GM12878 (cell line): ENCODE measurements at regions of chr16 and their contacts with region 1.

Region 1: DNA sequence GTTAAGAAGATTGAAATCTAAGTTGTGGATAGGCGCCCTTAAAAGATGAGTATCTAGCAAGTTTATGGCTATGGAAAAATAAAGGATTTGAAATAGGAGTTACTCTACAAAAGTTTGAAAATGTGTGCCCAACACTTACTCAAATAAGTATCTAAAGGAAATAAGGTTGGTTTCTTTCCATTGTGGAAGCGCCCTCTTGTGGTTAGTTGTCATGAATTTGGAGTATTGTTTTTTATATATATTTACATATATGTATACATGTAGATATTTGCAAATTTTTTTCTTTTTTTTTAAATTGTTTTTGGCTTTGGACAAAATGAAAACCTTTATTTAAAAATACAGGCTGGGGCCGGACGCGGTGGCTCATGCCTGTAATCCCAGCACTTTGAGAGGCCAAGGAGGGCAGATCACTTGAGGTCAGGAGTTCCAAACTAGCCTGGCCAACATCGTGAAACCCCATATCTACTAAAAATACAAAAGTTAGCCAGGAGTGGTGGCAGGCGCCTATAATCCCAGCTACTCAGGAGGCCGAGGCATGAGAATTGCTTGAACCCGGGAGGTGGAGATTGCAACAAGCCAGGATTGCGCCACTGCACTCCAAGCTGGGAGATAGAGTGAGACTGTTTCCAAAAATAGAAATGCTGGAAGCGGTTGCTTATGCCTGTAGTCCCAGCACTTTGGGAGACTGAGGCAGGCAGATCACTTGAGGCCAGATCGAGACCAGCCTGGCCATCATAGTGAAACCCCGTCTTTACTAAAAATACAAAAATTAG is 24.0 kb upstream of the VPS4A start:
- DNase-seq: peak; percentile 5
- ATAC-seq: peak; percentile 68
- H3K4me3 ChIP-seq: no peak overlapping the region
- H3K27ac ChIP-seq: no peak overlapping the region
- H3K4me1 ChIP-seq: no peaks in the 10 kb centered on the region
- H3K27me3 ChIP-seq: no peaks in the 10 kb centered on the region
- CTCF ChIP-seq: peak; percentile 26 to 54 (median 32); a peak in 4 of 6 replicates
- EP300 ChIP-seq: no peak
- POLR2A ChIP-seq: no peak
- RAD21 ChIP-seq: peak; percentile 60

Region 2: DNA sequence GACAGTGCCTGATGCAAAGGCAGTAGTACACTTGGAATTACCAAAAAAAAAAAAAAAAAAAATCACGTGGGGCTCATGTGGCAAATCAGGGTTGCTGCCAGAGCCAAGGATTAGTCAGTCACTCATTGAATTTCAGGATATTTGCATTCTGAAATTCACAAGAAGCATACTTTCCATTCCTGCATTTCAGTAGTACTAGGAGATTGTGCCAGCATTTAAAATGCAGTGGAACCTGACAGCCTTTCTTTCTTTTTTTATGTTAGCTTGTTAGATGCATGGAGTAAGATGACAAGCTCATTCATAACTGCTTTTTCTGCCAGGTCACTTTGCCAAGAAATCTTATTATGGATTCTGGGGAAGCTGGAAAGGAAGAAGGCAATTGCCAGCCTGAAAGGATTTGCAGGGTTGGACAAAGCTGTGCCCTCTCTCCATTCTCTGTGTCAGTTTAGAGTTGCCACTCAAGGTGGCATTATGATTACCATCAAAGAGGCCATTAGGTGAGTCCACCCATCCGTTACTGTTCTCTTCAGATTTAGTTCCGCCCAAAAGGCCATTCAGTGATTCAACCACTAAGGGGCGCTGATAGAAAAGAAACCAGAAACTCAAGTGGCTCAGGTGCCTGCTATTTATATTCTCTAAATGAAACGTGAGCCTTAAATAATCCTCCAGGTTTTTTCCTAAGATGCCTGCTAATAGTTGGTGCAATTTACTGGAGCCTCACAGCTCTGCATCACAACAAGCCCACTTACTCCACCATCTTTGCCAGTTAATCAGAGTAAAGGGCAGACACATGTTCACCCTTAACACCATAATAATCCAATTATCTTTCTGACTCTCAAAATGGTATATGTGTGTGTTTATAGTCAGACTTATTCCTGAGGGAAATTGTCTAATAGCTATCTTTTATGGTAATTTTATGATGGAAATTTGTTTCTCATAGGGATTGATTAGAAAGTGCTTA is 384.8 kb before region 1 on chr16:
- CTCF ChIA-PET with region 1: interaction called, 4 read pairs
- POLR2A ChIA-PET with region 1: no interaction called
- RAD21 ChIA-PET with region 1: interaction called, 3 read pairs
- SMC1A ChIA-PET with region 1: interaction called, 4 read pairs
- in situ Hi-C with region 1: no loop called
- intact Hi-C with region 1: loop called (anchors 10 kb)
- DNase-seq: no peak
- ATAC-seq: peak; percentile 68
- H3K4me3 ChIP-seq: no peak overlapping the region
- H3K27ac ChIP-seq: no peak overlapping the region
- H3K4me1 ChIP-seq: no peaks in the 10 kb centered on the region
- H3K27me3 ChIP-seq: no peaks in the 10 kb centered on the region
- CTCF ChIP-seq: peak; percentile 54 to 61 (median 54); a peak in 5 of 6 replicates
- EP300 ChIP-seq: no peak
- POLR2A ChIP-seq: no peak
- RAD21 ChIP-seq: peak; percentile 79

Region 3: DNA sequence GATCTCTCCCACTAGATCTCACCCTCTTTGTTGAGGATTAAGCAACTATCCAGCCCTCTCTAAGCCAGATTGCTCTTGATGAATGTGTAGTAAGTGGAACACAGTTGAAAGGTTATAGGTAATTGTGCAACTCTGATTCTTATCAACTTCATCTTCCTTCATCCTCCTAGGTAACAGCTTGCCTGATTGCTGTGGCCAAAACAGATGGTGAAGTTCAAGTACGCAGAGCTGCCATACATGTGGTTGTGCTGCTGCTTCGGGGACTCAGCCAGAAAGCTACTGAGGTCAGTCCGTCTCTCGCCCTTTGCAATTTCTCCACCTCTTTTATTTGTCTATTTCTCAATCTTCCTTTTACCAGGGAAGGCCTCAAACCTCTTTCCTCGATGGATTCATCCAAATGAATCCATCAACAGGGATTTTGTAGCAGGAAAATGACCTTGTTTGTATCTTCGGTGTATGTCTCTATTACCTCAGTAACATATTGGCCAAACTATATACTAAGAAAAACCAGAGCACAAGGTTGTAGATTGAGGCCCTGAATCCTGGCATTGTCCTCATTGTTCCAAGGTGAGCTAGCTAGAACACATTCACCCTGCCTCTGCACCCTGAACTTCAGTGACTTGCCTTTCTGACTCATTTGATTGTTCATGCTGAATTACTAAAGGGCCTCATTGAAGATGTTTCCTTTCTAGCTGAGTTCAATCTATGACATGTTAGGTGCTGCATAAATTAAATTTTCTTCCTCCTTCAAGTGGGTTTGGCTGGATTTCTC is 246.8 kb before region 1 on chr16:
- CTCF ChIA-PET with region 1: no interaction called
- POLR2A ChIA-PET with region 1: no interaction called
- RAD21 ChIA-PET with region 1: no interaction called
- SMC1A ChIA-PET with region 1: no interaction called
- in situ Hi-C with region 1: no loop called
- intact Hi-C with region 1: no loop called
- DNase-seq: no peak
- ATAC-seq: no peak
- H3K4me3 ChIP-seq: no peak overlapping the region
- H3K27ac ChIP-seq: no peak overlapping the region
- H3K4me1 ChIP-seq: no peaks in the 10 kb centered on the region
- H3K27me3 ChIP-seq: no peaks in the 10 kb centered on the region
- CTCF ChIP-seq: no peak
- EP300 ChIP-seq: no peak
- POLR2A ChIP-seq: no peak
- RAD21 ChIP-seq: no peak

Region 4: GRCh38 chr16:69112285-69113129 is 174.6 kb before region 1 on chr16:
- CTCF ChIA-PET with region 1: interaction called, 12 read pairs
- POLR2A ChIA-PET with region 1: no interaction called
- RAD21 ChIA-PET with region 1: interaction called, 4 read pairs
- SMC1A ChIA-PET with region 1: no interaction called
- in situ Hi-C with region 1: no loop called
- intact Hi-C with region 1: no loop called
- DNase-seq: no peak
- ATAC-seq: peak; percentile 99
- H3K4me3 ChIP-seq: no peak overlapping the region
- H3K27ac ChIP-seq: no peak overlapping the region
- H3K4me1 ChIP-seq: no peaks in the 10 kb centered on the region
- H3K27me3 ChIP-seq: no peaks in the 10 kb centered on the region
- CTCF ChIP-seq: peak; percentile 83 to 91 (median 84)
- EP300 ChIP-seq: no peak
- POLR2A ChIP-seq: no peak
- RAD21 ChIP-seq: peak; percentile 48

Region 5: DNA sequence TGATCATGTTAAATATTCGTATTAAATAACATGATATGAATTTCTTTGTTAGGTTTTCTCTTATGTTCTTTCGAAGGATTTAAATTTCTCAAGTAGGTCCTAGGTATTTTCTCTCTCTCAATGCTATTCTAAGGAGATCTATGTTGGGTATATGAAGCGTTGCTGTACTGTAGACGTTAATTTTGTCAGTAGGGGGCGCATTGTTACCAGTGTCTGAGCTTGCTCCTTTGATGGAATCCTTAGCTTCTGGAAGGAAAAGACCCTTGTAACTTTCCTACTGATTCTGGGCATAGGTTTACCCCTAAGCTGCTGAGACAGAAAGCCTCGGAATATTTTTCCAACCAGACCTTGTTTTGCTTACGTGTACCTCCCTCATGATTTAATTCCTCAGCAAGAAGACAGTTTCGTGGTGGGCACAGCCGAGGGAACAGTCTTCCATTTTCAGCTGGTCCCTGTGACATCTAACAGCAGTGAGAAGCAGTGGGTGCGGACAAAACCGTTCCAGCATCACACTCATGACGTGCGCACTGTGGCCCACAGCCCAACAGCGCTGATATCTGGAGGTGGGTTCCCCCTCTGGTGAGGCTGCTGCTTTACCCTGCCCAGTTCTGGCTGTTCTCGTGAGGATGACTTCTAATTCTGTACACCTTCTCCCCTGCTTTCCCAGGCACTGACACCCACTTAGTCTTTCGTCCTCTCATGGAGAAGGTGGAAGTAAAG is 136.8 kb before region 1 on chr16:
- CTCF ChIA-PET with region 1: interaction called, 193 read pairs
- POLR2A ChIA-PET with region 1: interaction called, 4 read pairs
- RAD21 ChIA-PET with region 1: interaction called, 69 read pairs
- SMC1A ChIA-PET with region 1: interaction called, 117 read pairs
- in situ Hi-C with region 1: loop called (anchors 5 kb)
- intact Hi-C with region 1: loop called (anchors 1 kb)
- DNase-seq: no peak
- ATAC-seq: peak; percentile 96
- H3K4me3 ChIP-seq: no peak overlapping the region
- H3K27ac ChIP-seq: no peak overlapping the region
- H3K4me1 ChIP-seq: no peaks in the 10 kb centered on the region
- H3K27me3 ChIP-seq: no peaks in the 10 kb centered on the region
- CTCF ChIP-seq: peak; percentile 64 to 76 (median 75)
- EP300 ChIP-seq: no peak
- POLR2A ChIP-seq: no peak
- RAD21 ChIP-seq: peak; percentile 84

Region 6: GRCh38 chr16:69166221-69166833 is 120.8 kb before region 1 on chr16:
- CTCF ChIA-PET with region 1: interaction called, 11 read pairs
- POLR2A ChIA-PET with region 1: no interaction called
- RAD21 ChIA-PET with region 1: interaction called, 4 read pairs
- SMC1A ChIA-PET with region 1: interaction called, 4 read pairs
- in situ Hi-C with region 1: no loop called
- intact Hi-C with region 1: no loop called
- DNase-seq: no peak
- ATAC-seq: peak; percentile 38; the same call in 2 of the 3 replicates
- H3K4me3 ChIP-seq: no peak overlapping the region
- H3K27ac ChIP-seq: no peak overlapping the region
- H3K4me1 ChIP-seq: peaks cover 5% of the 10 kb centered on the region
- H3K27me3 ChIP-seq: no peaks in the 10 kb centered on the region
- CTCF ChIP-seq: no peak
- EP300 ChIP-seq: no peak
- POLR2A ChIP-seq: no peak
- RAD21 ChIP-seq: no peak

Region 7: DNA sequence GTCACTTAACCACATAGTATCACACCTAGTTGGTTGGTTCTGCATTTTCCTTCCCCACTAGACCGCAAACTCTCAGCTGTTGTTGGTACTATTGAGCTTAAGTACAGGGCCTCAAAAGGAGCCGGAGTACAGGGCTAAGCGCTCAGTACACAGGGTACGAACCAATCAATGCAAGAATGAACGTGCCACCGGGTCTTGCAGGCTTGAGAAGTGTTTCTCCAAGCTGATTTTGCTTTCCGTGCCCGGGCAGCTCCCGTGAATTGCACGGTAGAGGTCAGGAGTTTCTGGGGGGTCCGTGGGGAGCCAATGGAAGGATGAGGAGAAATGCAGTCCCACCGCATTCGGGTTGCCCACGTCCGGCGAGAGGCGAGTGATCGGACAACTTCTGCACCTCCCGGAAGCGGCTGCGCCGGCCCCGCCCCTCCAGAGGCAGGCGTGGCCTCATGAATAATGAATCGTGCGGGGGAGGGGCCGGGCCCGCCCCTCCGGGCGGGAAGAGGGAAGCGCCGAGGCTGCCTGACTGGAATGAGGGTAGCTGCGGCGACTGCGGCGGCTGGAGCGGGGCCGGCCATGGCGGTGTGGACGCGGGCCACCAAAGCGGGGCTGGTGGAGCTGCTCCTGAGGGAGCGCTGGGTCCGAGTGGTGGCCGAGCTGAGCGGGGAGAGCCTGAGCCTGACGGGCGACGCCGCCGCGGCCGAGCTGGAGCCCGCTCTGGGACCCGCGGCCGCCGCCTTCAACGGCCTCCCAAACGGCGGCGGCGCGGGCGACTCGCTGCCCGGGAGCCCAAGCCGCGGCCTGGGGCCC is 100.3 kb before region 1 on chr16 and contains the start of gene SNTB2:
- CTCF ChIA-PET with region 1: interaction called, 5 read pairs
- POLR2A ChIA-PET with region 1: no interaction called
- RAD21 ChIA-PET with region 1: interaction called, 4 read pairs
- SMC1A ChIA-PET with region 1: interaction called, 10 read pairs
- in situ Hi-C with region 1: no loop called
- intact Hi-C with region 1: no loop called
- DNase-seq: peak; percentile 95
- ATAC-seq: peak; percentile 92
- H3K4me3 ChIP-seq: peak within 1 kb of the TSS; percentile 88
- H3K27ac ChIP-seq: peak within 1 kb of the TSS; percentile 90
- H3K4me1 ChIP-seq: peaks cover 22% of the 10 kb centered on the region
- H3K27me3 ChIP-seq: no peaks in the 10 kb centered on the region
- CTCF ChIP-seq: no peak
- EP300 ChIP-seq: peak; percentile 89 to 96
- POLR2A ChIP-seq: peak; percentile 77
- RAD21 ChIP-seq: no peak
- polyA plus RNA-seq, gene SNTB2: 1.2 to 1.4 TPM

Region 8: DNA sequence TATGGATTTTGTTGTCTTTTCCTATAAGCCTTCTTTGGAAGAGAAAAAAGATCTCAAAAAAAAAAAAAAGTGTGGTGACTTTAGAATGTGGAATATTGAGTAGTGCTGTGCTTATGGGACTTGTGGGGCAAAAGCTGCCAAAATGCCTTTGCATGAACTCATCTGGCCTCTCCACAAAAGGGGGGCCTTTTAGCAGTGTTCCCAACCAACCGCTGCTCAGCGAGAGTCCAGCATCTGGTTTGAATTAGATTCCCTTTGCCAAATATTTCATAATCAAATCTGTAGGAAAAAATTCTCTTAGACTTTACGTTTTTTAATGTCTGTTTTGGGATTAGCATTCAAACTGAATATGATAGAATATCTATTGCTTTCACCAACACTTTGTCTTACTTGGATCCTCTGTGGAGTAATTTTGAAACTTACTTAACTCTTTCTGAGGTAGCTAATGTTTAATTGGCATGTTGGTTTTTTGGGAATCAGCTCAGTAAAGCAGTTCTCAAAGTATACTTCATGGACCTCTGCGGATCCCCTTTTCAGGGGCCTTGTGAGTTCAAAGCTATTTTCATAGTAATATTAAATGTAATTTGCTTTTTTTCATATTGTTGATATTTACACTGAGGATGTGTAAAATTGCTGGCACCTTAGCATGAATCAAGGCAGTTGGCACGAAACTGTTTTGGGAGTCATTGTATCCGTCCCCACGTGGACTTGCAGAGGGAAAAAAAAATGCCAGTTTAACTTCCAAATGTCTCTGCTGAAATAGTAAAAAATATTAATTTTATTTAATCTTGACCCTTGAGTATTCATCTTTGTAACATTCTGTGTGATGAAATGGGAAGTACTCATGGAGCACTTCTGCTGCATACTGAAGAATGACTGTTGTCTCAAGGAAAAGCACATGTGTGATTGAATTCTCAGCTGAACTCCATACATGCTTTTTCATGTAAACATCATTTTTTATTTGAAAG is 10.7 kb before region 1 on chr16:
- CTCF ChIA-PET with region 1: interaction called, 16 read pairs
- POLR2A ChIA-PET with region 1: no interaction called
- RAD21 ChIA-PET with region 1: interaction called, 4 read pairs
- SMC1A ChIA-PET with region 1: interaction called, 6 read pairs
- in situ Hi-C with region 1: no loop called
- intact Hi-C with region 1: no loop called
- DNase-seq: no peak
- ATAC-seq: no peak
- H3K4me3 ChIP-seq: no peak overlapping the region
- H3K27ac ChIP-seq: no peak overlapping the region
- H3K4me1 ChIP-seq: no peaks in the 10 kb centered on the region
- H3K27me3 ChIP-seq: no peaks in the 10 kb centered on the region
- CTCF ChIP-seq: no peak
- EP300 ChIP-seq: no peak
- POLR2A ChIP-seq: no peak
- RAD21 ChIP-seq: no peak